Heart left ventricle (tissue), 16 donors: ENCODE measurements at regions of chr10 and their contacts with region 1.

Region 1: GRCh38 chr10:32338262-32338661 is 8.7 kb downstream of the EPC1 start:
- DNase-seq: no peak
- ATAC-seq: no peak
- H3K4me3 ChIP-seq: no peak overlapping the region
- H3K27ac ChIP-seq: no peak overlapping the region
- H3K4me1 ChIP-seq: peaks cover 3 to 99% (median 91%) of the 10 kb centered on the region in 12 donors
- H3K27me3 ChIP-seq: no peaks in the 10 kb centered on the region
- CTCF ChIP-seq: no peak
- POLR2A ChIP-seq: no peak

Region 2: GRCh38 chr10:31847515-31847914 is 490.7 kb before region 1 on chr10:
- intact Hi-C with region 1: no loop called
- DNase-seq: no peak
- ATAC-seq: no peak
- H3K4me3 ChIP-seq: no peak overlapping the region
- H3K27ac ChIP-seq: no peak overlapping the region
- H3K4me1 ChIP-seq: peaks cover 0 to 11% (median 0%) of the 10 kb centered on the region in 12 donors
- H3K27me3 ChIP-seq: no peaks in the 10 kb centered on the region
- CTCF ChIP-seq: no peak
- POLR2A ChIP-seq: no peak

Region 3: DNA sequence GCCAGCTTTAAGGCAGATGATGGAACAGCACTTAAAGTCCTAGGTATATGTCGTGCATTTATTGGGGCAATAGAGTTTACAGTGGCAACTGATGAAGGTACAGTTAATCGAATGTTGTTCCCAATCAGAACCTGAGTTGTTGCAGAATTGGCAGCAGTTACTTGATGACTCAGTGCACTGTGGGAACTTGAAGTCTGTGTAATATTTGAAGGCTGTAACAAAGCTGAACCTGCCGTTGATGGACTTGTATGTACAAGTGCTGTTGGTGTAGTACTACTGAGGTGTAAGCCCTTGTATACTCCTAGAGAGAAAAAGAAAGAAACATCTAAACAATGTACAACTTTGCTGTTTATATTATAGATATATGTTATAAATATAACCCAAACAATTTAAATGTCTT is 66.6 kb before region 1 on chr10:
- intact Hi-C with region 1: loop called in 2 of 10 experiments (anchors 5 kb)
- DNase-seq: no peak
- ATAC-seq: peak in 2 of 4 donors; percentile 45
- H3K4me3 ChIP-seq: no peak overlapping the region
- H3K27ac ChIP-seq: no peak overlapping the region
- H3K4me1 ChIP-seq: peaks cover 0 to 17% (median 0%) of the 10 kb centered on the region in 12 donors
- H3K27me3 ChIP-seq: no peaks in the 10 kb centered on the region
- CTCF ChIP-seq: no peak
- POLR2A ChIP-seq: no peak

Region 4: GRCh38 chr10:32680803-32681557 is 342.7 kb after region 1 on chr10:
- intact Hi-C with region 1: no loop called
- DNase-seq: no peak
- ATAC-seq: no peak
- H3K4me3 ChIP-seq: no peak overlapping the region
- H3K27ac ChIP-seq: no peak overlapping the region
- H3K4me1 ChIP-seq: no peaks in the 10 kb centered on the region
- H3K27me3 ChIP-seq: no peaks in the 10 kb centered on the region
- CTCF ChIP-seq: no peak
- POLR2A ChIP-seq: no peak